Left ventricle myocardium inferior (tissue), 1 donor: ENCODE measurements at regions of chr22 and their contacts with region 1.

Region 1: DNA sequence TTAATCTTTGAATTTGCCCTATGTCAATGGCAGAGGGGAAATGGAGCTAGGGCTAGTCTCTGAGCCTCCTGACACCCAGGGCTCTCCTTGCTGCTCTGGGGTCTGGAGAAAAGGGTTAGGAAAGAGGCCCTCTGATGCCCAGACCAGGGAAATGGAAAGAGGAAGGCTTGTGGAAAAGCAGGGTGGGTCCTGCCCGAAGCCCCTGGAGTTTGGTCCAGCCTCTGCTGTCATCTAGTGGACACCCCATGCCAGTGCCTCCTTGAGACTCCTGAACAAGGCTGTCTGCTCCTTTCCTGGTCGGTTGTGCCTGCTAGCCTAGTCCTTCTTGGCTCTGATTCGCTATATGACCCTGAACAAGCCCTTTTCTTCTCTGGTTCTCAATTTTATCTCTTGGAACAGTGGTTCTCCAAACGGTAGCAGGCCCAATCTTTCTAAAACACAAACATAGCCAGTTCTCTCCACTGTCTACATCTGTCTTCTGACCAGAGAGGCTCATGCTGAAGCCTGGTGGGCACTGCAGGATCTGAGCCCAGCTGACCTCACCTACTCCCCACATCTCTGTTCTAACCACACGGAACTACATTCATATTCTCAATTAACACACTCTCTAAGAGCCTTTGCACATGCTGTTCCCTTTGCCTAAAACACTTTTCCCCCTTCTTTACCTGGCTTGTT is 8.8 kb upstream of the PLA2G3 start:
- DNase-seq: peak; percentile 66
- H3K4me3 ChIP-seq: no peak overlapping the region
- H3K27ac ChIP-seq: peak overlapping the region; percentile 83
- H3K4me1 ChIP-seq: peaks cover 13% of the 10 kb centered on the region
- H3K27me3 ChIP-seq: no peaks in the 10 kb centered on the region
- CTCF ChIP-seq: peak; percentile 99

Region 2: DNA sequence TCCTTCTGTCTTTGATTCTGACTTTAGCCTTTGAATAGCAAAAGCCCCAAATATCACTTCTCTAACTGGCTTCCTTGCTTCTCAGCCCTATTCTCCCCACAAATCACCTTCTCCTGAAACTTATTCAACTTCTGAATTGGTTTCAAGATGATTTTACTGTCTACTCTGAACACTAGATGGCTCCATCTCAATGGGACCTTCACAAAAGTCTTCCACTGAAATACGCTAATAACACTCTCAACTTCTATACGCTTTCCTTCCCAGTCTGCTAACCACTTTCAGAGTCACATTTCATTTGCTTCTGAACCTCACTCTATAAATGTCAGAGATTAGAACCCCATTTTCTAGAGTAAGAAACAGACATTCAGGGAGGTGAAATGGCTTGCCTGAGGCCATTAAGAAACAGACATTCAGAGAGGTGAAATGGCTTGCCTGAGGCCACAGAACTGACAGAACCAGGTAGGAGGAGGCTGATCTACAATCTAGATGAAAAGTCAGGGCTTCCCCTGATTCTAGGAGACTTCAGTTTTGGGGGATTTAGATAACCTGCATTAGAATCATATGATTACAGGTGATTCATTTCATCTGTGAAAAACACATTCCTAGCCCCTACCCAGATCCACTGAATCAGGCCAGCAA is 201.2 kb before region 1 on chr22:
- intact Hi-C with region 1: loop called (anchors 5 kb)
- DNase-seq: no peak
- H3K4me3 ChIP-seq: no peak overlapping the region
- H3K27ac ChIP-seq: peak overlapping the region; percentile 75
- H3K4me1 ChIP-seq: peaks cover 40% of the 10 kb centered on the region
- H3K27me3 ChIP-seq: no peaks in the 10 kb centered on the region
- CTCF ChIP-seq: peak; percentile 79

Region 3: DNA sequence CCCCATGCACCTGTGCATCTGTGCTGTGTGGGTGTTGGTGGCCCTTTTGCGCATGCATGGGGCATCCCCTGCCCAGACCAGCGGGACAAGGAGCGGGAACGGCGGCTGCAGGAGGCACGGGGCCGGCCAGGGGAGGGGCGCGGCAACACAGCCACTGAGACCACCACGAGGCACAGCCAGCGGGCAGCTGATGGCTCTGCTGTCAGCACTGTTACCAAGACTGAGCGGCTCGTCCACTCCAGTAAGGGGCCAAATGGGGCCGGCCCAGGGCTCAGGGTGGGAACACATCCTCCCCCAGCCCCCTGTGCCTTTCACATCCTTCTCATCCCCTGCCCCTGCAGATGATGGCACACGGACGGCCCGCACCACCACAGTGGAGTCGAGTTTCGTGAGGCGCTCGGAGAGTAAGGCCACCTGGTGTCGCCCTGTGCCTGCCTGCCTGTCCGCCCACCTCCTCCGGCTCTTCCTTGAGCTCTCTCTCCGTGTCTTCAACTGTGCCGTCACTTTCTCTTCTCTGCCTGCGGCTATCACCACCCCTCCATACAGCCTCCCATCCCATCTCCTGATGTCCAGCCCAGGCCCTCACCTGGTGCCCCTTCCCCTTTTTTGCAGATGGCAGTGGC is 52.3 kb before region 1 on chr22:
- intact Hi-C with region 1: no loop called
- DNase-seq: no peak
- H3K4me3 ChIP-seq: no peak overlapping the region
- H3K27ac ChIP-seq: peak overlapping the region; percentile 40
- H3K4me1 ChIP-seq: peaks cover 93% of the 10 kb centered on the region
- H3K27me3 ChIP-seq: no peaks in the 10 kb centered on the region
- CTCF ChIP-seq: no peak

Region 4: DNA sequence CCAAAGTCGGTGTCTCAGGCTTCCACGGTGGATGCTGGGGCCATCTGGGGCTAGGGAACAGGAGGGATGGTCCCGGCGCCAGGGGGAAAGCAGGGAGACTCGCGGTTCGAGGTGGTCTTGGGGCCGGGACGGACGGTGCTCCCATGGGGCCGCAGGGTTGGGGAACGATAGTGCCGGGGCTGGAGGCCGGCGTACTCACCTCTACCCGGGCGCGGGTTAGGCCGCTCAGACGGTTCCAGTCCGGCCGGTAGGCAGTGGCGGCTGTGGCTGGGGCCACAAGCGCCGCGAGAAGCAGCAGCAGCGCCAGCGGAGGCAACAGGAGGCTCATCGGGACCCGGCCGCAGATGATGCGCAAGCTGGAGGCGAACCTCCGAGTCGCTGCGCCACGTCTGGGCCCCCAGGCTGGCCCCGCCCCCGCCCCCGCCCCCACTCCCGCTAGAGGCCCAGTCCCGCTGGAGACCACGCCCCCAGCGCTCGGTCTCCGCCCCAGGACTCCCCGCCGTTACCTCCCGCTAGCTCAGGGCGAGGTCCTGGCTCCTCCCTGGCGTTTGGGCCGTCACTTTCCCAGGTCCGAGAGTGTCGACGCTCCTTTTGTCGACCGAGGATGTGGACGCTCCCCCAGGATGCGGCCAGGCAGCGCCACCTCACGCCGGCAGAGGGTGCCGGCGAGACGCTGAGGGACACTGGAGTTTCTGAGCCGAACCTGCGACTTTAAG is 41.8 kb before region 1 on chr22 and contains the start of gene SELENOM:
- intact Hi-C with region 1: loop called (anchors 5 kb)
- DNase-seq: peak; percentile 97
- H3K4me3 ChIP-seq: peak within 1 kb of the TSS; percentile 85
- H3K27ac ChIP-seq: peak within 1 kb of the TSS; percentile 95
- H3K4me1 ChIP-seq: peaks cover 48% of the 10 kb centered on the region
- H3K27me3 ChIP-seq: no peaks in the 10 kb centered on the region
- CTCF ChIP-seq: peak; percentile 96
- total RNA-seq, gene SELENOM: 51.5 TPM

Region 5: GRCh38 chr22:31223786-31224191 is 74.7 kb after region 1 on chr22:
- intact Hi-C with region 1: no loop called
- DNase-seq: no peak
- H3K4me3 ChIP-seq: no peak overlapping the region
- H3K27ac ChIP-seq: no peak overlapping the region
- H3K4me1 ChIP-seq: peaks cover 46% of the 10 kb centered on the region
- H3K27me3 ChIP-seq: no peaks in the 10 kb centered on the region
- CTCF ChIP-seq: no peak